ENCODE measurements at regions of chr2 and their contacts with region 1.

Region 1: GRCh38 chr2:198296665-198297308 is 492.4 kb downstream of the PLCL1 start:
- DNase-seq: peak; percentile 11 to 67 (median 54)
- ATAC-seq: peak; percentile 84
- H3K4me3 ChIP-seq: no peak overlapping the region
- H3K4me3 Mint-ChIP-seq: peak overlapping the region in 1 of 10 donors; percentile 8
- H3K27ac ChIP-seq: no peak overlapping the region
- H3K27ac Mint-ChIP-seq: peak overlapping the region in 1 of 9 donors; percentile 41
- H3K4me1 ChIP-seq: no peaks in the 10 kb centered on the region
- H3K4me1 Mint-ChIP-seq: peaks cover 0 to 5% (median 0%) of the 10 kb centered on the region in 7 donors
- H3K27me3 ChIP-seq: no peaks in the 10 kb centered on the region
- H3K27me3 Mint-ChIP-seq: peaks cover 7 to 19% (median 8%) of the 10 kb centered on the region in 5 donors

Region 2: GRCh38 chr2:196291873-196292800 is 2004.7 kb before region 1 on chr2:
- CTCF ChIA-PET with region 1: no interaction called
- POLR2A ChIA-PET with region 1: no interaction called
- intact Hi-C with region 1: loop called in 1 of 2 experiments (anchors 10 kb)
- DNase-seq: no peak
- ATAC-seq: peak; percentile 47
- H3K4me3 ChIP-seq: no peak overlapping the region
- H3K4me3 Mint-ChIP-seq: peak overlapping the region in 1 of 10 donors; percentile 31
- H3K27ac ChIP-seq: no peak overlapping the region
- H3K27ac Mint-ChIP-seq: peak overlapping the region in 3 of 9 donors; percentile 2 to 51 (median 44)
- H3K4me1 ChIP-seq: peaks cover 6 to 10% of the 10 kb centered on the region in 2 donors
- H3K4me1 Mint-ChIP-seq: peaks cover 21 to 56% (median 42%) of the 10 kb centered on the region in 7 donors
- H3K27me3 ChIP-seq: no peaks in the 10 kb centered on the region
- H3K27me3 Mint-ChIP-seq: no peaks in the 10 kb centered on the region

Region 3: GRCh38 chr2:197057959-197058358 is 1238.8 kb before region 1 on chr2:
- CTCF ChIA-PET with region 1: no interaction called
- POLR2A ChIA-PET with region 1: no interaction called
- intact Hi-C with region 1: no loop called
- DNase-seq: no peak
- ATAC-seq: no peak
- H3K4me3 ChIP-seq: no peak overlapping the region
- H3K4me3 Mint-ChIP-seq: no peak overlapping the region
- H3K27ac ChIP-seq: no peak overlapping the region
- H3K27ac Mint-ChIP-seq: peak overlapping the region in 2 of 9 donors; percentile 4 to 60
- H3K4me1 ChIP-seq: peaks cover 0 to 3% of the 10 kb centered on the region in 2 donors
- H3K4me1 Mint-ChIP-seq: peaks cover 7 to 28% (median 20%) of the 10 kb centered on the region in 7 donors
- H3K27me3 ChIP-seq: no peaks in the 10 kb centered on the region
- H3K27me3 Mint-ChIP-seq: no peaks in the 10 kb centered on the region

Region 4: GRCh38 chr2:197434541-197435513 is 862.0 kb before region 1 on chr2 and contains the start of gene SF3B1:
- CTCF ChIA-PET with region 1: no interaction called
- POLR2A ChIA-PET with region 1: no interaction called
- intact Hi-C with region 1: loop called in 1 of 2 experiments (anchors 10 kb)
- DNase-seq: peak; percentile 98 to 99 (median 99)
- ATAC-seq: peak; percentile 99
- H3K4me3 ChIP-seq: peak within 1 kb of the TSS; percentile 98
- H3K4me3 Mint-ChIP-seq: peak within 1 kb of the TSS; percentile 88 to 100 (median 98)
- H3K27ac ChIP-seq: peak within 1 kb of the TSS; percentile 98
- H3K27ac Mint-ChIP-seq: peak within 1 kb of the TSS; percentile 100
- H3K4me1 ChIP-seq: peaks cover 28 to 46% of the 10 kb centered on the region in 2 donors
- H3K4me1 Mint-ChIP-seq: peaks cover 34 to 60% (median 49%) of the 10 kb centered on the region in 7 donors
- H3K27me3 ChIP-seq: no peaks in the 10 kb centered on the region
- H3K27me3 Mint-ChIP-seq: peaks cover 0 to 3% (median 0%) of the 10 kb centered on the region in 5 donors
- total RNA-seq, gene SF3B1: 330 to 737 (median 528) TPM

Region 5: DNA sequence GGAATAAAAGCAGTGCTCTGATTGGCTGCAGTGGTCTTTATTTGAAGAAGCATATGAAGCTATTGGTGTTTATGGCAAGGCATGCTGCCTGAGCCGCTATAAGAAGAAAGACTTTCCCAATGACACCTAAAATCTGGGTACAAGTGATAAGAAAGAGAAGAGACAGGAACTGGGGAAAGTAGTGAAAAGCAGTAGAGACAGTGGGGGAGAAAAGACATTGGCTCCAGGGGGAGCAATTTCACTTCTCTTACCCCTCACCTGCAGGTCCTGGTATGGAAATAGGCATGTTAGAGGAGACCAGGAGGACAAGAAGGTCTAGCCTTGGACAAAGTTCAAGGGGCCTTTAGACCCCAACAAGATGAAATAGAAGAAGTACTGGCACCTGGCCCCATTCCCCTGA is 445.3 kb before region 1 on chr2:
- CTCF ChIA-PET with region 1: no interaction called
- POLR2A ChIA-PET with region 1: no interaction called
- intact Hi-C with region 1: loop called (anchors 2 kb)
- DNase-seq: no peak
- ATAC-seq: no peak
- H3K4me3 ChIP-seq: no peak overlapping the region
- H3K4me3 Mint-ChIP-seq: peak overlapping the region in 7 of 10 donors; percentile 3 to 80 (median 29)
- H3K27ac ChIP-seq: no peak overlapping the region
- H3K27ac Mint-ChIP-seq: peak overlapping the region in 8 of 9 donors; percentile 60 to 100 (median 98)
- H3K4me1 ChIP-seq: peaks cover 4 to 76% of the 10 kb centered on the region in 2 donors
- H3K4me1 Mint-ChIP-seq: peaks cover 29 to 100% (median 93%) of the 10 kb centered on the region in 7 donors
- H3K27me3 ChIP-seq: no peaks in the 10 kb centered on the region
- H3K27me3 Mint-ChIP-seq: no peaks in the 10 kb centered on the region

Region 6: DNA sequence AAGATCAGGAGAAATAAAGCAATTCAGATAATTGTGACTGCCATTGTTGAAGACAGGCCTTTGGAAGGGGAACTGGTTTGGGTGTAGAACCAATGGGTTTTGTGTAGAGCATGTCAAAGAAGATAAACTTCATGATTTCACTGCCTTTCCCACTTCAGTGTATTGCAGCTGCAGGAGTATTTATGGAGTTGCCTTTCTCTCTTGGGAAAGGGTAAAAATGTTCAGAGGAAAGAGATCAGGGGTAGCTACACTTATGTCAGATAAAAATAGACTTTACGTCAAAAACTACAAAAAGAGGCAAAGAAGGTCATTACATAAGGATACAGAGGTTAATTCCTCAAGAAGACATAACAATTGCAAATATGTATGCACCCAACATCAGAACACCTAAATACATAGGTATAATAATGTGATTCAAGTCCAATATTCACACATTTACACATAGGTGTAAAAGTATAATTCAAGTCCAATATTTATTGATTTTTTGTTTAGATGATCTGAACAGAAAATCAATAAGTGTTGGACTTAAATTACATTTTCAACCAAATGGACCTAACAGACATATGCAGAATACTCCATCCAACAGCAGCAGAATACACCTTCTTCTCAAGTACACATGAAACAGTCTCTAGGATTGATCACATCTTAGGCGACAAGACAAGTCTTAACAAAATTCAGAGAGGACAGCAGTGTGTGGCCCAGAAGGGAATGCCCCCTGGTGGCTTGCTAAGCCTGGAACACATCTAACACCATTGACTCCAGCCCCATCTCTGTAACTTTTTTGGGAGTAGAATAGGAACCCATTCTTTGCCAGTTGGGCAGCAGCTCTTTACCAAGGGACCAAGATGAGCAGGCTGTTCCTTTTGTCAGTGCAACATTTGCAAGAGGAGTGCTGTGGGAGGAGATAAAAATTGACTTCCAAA is 242.8 kb before region 1 on chr2:
- CTCF ChIA-PET with region 1: interaction called, 3 read pairs
- POLR2A ChIA-PET with region 1: no interaction called
- intact Hi-C with region 1: loop called (anchors 1 to 5 kb)
- DNase-seq: peak in 8 of 9 donors; percentile 23 to 62 (median 44)
- ATAC-seq: peak; percentile 77
- H3K4me3 ChIP-seq: no peak overlapping the region
- H3K4me3 Mint-ChIP-seq: no peak overlapping the region
- H3K27ac ChIP-seq: no peak overlapping the region
- H3K27ac Mint-ChIP-seq: peak overlapping the region in 4 of 9 donors; percentile 17 to 46 (median 30)
- H3K4me1 ChIP-seq: no peaks in the 10 kb centered on the region
- H3K4me1 Mint-ChIP-seq: peaks cover 3 to 67% (median 36%) of the 10 kb centered on the region in 7 donors
- H3K27me3 ChIP-seq: no peaks in the 10 kb centered on the region
- H3K27me3 Mint-ChIP-seq: no peaks in the 10 kb centered on the region

Region 7: GRCh38 chr2:198220763-198221610 is 75.8 kb before region 1 on chr2:
- CTCF ChIA-PET with region 1: no interaction called
- POLR2A ChIA-PET with region 1: no interaction called
- intact Hi-C with region 1: no loop called
- DNase-seq: no peak
- ATAC-seq: no peak
- H3K4me3 ChIP-seq: no peak overlapping the region
- H3K4me3 Mint-ChIP-seq: no peak overlapping the region
- H3K27ac ChIP-seq: no peak overlapping the region
- H3K27ac Mint-ChIP-seq: no peak overlapping the region
- H3K4me1 ChIP-seq: no peaks in the 10 kb centered on the region
- H3K4me1 Mint-ChIP-seq: no peaks in the 10 kb centered on the region
- H3K27me3 ChIP-seq: no peaks in the 10 kb centered on the region
- H3K27me3 Mint-ChIP-seq: peaks cover 0 to 14% (median 0%) of the 10 kb centered on the region in 5 donors

Region 8: DNA sequence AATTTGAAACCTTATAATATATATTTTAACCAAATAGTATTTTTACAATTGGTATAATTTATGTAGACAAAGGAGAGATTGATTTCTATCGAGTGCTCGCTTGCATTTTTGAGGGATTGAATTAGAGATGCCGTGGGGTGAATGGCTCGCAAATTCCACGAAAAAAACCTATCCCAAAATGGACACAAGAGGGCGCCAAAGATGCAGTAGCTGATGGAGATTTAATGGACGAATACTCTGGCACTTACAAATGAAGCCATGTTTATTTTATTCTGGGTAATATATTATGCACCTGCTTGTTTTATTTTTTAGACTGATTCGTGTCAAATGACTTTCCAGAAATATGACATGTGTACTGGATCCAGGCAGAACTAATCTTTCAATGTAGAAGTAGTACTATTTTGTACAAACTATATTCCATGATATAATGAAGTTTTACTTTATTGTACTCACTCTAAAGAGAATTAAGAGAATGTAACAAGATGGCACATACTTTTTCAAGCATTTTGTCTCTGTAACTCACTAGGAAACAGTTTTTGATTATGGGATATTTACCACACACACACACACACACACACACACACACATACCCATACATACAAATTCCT is 13.0 kb after region 1 on chr2:
- CTCF ChIA-PET with region 1: interaction called, 17 read pairs
- POLR2A ChIA-PET with region 1: interaction called, 3 read pairs
- intact Hi-C with region 1: no loop called
- DNase-seq: peak in 8 of 9 donors; percentile 15 to 67 (median 47)
- ATAC-seq: peak; percentile 68
- H3K4me3 ChIP-seq: no peak overlapping the region
- H3K4me3 Mint-ChIP-seq: no peak overlapping the region
- H3K27ac ChIP-seq: no peak overlapping the region
- H3K27ac Mint-ChIP-seq: no peak overlapping the region
- H3K4me1 ChIP-seq: no peaks in the 10 kb centered on the region
- H3K4me1 Mint-ChIP-seq: peaks cover 0 to 6% (median 0%) of the 10 kb centered on the region in 7 donors
- H3K27me3 ChIP-seq: peaks cover 0 to 3% of the 10 kb centered on the region in 2 donors
- H3K27me3 Mint-ChIP-seq: peaks cover 24 to 44% (median 40%) of the 10 kb centered on the region in 5 donors